Sciatic nerve (tissue), 2 donors: ENCODE measurements at regions of chr2 and their contacts with region 1.

Region 1: GRCh38 chr2:112433932-112434730 is 686 bp upstream of the RGPD8 start:
- DNase-seq: no peak
- ATAC-seq: no peak

Region 2: DNA sequence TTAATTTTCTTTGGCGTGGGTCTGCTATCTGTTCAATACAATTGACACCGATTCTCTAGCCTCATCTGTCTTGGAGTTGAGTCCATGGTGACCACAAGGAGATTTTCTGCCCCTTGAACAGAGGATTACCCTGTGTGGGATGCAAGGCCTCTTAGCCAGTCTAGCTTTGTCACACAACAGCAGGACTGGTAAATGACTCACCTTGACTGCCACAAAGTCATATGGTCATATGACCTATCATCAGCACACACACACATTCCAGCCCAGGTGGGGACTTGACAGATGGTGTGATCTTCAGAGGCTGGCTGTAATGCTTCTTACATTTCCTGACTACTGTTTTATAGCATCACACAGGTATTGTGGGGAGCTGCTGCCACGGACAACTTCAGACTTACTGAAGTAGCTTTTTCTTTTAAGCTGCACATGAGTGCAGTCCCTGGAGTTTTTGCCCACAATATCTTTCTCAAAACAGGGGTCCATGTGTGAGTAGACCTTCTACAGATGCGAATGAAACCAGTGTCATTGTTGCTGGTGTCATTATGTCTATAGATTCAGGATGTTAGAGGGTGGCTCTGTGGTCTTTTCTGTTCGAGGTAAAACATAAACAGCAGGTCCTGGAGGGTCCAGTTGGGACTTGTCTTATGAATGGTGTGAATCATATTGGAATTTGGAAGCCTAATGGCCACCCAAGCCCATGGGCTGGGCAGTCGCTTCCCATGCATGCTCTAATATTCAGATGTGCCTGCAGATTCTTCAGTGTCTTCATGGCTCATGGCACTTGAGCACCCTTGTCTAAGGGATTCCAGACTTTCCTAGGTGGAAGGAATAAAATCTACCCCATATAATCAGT is 1720.4 kb before region 1 on chr2:
- intact Hi-C with region 1: no loop called
- DNase-seq: no peak
- ATAC-seq: no peak

Region 3: GRCh38 chr2:112259509-112260294 is 174.4 kb before region 1 on chr2:
- intact Hi-C with region 1: loop called (anchors 10 kb)
- DNase-seq: peak; percentile 91
- ATAC-seq: peak; percentile 79

Region 4: DNA sequence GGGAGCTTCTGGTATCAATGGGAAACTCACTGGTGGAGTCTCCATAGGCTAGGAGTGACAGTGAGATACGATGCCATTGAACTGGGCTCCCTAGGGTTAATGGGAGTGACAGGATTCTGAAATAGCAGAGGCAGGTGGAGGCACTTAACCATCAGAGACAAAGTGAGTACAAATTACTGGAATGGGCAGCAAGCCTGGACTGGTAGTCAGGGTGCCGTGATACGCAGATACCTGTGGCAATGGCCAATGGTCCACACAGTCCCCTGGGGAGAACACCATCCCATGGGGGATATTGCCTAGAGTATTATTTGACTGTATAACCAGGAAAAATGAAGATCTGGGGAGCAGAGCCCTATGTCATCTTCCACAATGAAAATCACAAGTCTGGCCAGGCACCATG is 167.6 kb after region 1 on chr2:
- intact Hi-C with region 1: no loop called
- DNase-seq: peak; percentile 35
- ATAC-seq: no peak